Vagina (tissue), 2 donors: ENCODE measurements at regions of chr2 and their contacts with region 1.

Region 1: DNA sequence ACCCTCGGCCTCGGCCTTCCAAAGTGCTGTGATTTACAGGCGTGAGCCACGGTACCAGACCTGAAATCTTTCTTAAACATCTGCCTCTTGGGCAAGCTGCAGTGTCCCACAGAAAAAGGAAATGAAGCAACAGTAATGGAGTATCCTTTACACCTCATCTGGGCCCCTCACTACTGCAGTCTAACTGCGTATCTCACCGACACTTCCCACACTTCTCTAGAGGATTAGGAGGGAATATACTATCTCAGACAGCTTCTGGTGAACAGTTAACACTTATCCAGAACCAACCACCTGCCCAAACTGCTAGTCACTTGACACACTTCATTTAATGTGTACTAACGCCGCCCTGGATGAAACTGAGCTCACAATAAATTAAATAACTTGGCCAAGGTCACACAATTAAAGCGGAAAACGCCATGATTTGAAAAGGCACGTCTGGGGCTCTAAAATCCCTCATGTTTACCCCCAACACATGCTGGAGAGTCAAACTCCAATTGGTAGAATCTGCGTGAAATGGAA is 993 bp downstream of the COX7A2L start:
- DNase-seq: peak in 1 of 2 donors; percentile 72
- H3K4me3 ChIP-seq: peak overlapping the region; percentile 54 to 91
- H3K27ac ChIP-seq: peak overlapping the region; percentile 94
- H3K4me1 ChIP-seq: peaks cover 52% of the 10 kb centered on the region
- H3K27me3 ChIP-seq: no peaks in the 10 kb centered on the region
- CTCF ChIP-seq: no peak
- POLR2A ChIP-seq: no peak

Region 2: GRCh38 chr2:41540272-41540998 is 819.6 kb before region 1 on chr2:
- intact Hi-C with region 1: no loop called
- DNase-seq: no peak
- H3K4me3 ChIP-seq: no peak overlapping the region
- H3K27ac ChIP-seq: no peak overlapping the region
- H3K4me1 ChIP-seq: no peaks in the 10 kb centered on the region
- H3K27me3 ChIP-seq: no peaks in the 10 kb centered on the region
- CTCF ChIP-seq: no peak
- POLR2A ChIP-seq: no peak

Region 3: GRCh38 chr2:42102024-42102590 is 257.9 kb before region 1 on chr2:
- intact Hi-C with region 1: loop called (anchors 10 kb)
- DNase-seq: no peak
- H3K4me3 ChIP-seq: peak overlapping the region; percentile 44 to 53
- H3K27ac ChIP-seq: peak overlapping the region; percentile 82
- H3K4me1 ChIP-seq: peaks cover 21% of the 10 kb centered on the region
- H3K27me3 ChIP-seq: no peaks in the 10 kb centered on the region
- CTCF ChIP-seq: no peak
- POLR2A ChIP-seq: no peak